Gastrocnemius medialis (tissue), 4 donors: ENCODE measurements at regions of chr1 and their contacts with region 1.

Region 1: DNA sequence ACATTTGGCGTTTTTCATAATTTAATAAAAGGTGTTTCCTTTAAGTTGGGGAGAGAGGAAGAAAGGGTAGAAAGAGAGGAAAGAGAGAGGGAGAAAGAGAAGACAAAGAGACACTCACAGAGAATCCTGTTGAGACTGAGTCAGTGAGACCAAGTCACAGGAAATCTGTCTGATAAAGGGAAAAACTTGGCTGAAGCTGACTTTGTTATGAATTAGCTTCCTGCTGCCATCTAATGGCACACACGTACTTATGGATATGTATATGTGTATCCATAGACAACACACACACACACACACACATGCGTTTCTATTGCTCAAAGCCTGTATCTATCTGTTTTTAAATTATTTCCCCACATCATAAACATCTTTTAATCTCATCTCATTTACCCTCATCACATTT is 42.5 kb upstream of the DISC1 start:
- DNase-seq: no peak
- ATAC-seq: peak; percentile 45 to 50
- H3K4me3 ChIP-seq: no peak overlapping the region
- H3K27ac ChIP-seq: peak overlapping the region in 1 of 4 donors; percentile 1
- H3K4me1 ChIP-seq: no peaks in the 10 kb centered on the region
- H3K27me3 ChIP-seq: no peaks in the 10 kb centered on the region
- CTCF ChIP-seq: no peak
- POLR2A ChIP-seq: no peak

Region 2: DNA sequence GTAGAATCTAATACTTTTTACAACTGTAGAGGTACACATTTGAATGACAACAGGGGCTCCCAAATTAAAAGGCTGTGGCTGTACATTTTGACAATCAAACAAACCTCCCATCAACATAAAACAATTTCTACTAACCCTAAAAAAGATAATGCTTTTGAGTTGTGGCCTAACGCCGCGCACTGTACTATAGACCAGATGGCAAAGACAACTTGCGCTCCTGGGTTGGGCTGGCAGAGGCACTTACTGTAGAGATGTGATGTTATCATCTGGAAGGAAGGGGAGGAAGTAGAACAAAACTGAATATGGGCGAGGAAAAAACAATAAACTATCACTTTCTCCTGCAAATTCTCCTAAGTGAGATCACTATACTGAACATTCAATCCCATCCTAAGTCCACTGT is 219.9 kb before region 1 on chr1:
- in situ Hi-C with region 1: loop called in 1 of 4 experiments (anchors 5 kb)
- intact Hi-C with region 1: no loop called
- DNase-seq: no peak
- ATAC-seq: no peak
- H3K4me3 ChIP-seq: no peak overlapping the region
- H3K27ac ChIP-seq: peak overlapping the region; percentile 19 to 84 (median 52)
- H3K4me1 ChIP-seq: peaks cover 19 to 37% of the 10 kb centered on the region in 2 donors
- H3K27me3 ChIP-seq: no peaks in the 10 kb centered on the region
- CTCF ChIP-seq: no peak
- POLR2A ChIP-seq: no peak

Region 3: DNA sequence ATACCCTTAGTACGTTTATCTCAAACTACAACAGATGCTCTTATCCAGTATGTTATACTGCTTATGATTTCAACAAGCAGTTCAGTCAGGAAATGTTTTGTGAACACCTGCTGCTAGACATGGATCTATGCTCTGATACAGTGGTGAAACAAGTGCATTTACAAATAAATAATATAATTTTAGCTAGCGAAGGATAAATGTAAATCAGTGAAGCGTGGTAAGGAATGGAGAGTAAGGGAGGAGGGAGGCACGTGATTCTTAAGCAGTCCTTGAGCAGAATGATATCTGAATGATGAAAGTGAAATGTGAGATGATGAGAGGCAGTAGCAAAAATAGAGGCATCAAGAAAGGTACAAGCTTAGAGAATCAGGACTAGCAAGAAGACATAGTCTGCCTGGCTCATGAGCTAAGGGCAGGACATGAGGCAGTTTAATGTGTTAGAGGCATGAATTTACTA is 49.4 kb before region 1 on chr1:
- in situ Hi-C with region 1: no loop called
- intact Hi-C with region 1: loop called (anchors 5 kb)
- DNase-seq: peak in 1 of 2 donors; percentile 36
- ATAC-seq: peak; percentile 98 to 99
- H3K4me3 ChIP-seq: peak overlapping the region; percentile 21 to 40 (median 31)
- H3K27ac ChIP-seq: peak overlapping the region; percentile 94 to 99 (median 96)
- H3K4me1 ChIP-seq: peaks cover 33 to 71% of the 10 kb centered on the region in 2 donors
- H3K27me3 ChIP-seq: no peaks in the 10 kb centered on the region
- CTCF ChIP-seq: no peak
- POLR2A ChIP-seq: peak; percentile 72 to 92